ENCODE measurements at regions of chr12 and their contacts with region 1.

Region 1: DNA sequence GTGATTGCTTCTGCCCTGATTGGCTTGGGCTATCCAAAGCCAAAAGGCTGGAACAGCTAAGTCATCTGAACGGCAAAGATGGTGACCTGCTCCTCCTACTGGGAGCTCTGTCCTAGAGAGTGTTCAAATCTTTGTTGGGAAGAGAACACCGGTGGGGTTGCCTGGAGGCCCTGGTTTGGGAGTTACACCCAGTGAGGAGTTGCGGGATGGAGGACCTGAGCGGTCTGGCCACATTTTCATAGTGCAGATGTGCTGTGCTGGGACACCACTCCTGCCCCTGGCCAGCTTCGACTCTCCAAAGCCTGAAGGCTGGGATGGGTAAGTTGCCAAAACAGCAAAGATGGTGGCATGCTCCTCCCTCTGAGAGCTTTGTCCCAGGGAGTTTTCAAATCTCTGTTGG is 795.4 kb downstream of the TRHDE start:
- DNase-seq: no peak
- H3K4me3 ChIP-seq: no peak overlapping the region
- H3K4me3 Mint-ChIP-seq: no peak overlapping the region
- H3K27ac ChIP-seq: no peak overlapping the region
- H3K27ac Mint-ChIP-seq: no peak overlapping the region
- H3K4me1 ChIP-seq: no peaks in the 10 kb centered on the region
- H3K4me1 Mint-ChIP-seq: no peaks in the 10 kb centered on the region
- H3K27me3 ChIP-seq: no peaks in the 10 kb centered on the region
- H3K27me3 Mint-ChIP-seq: no peaks in the 10 kb centered on the region

Region 2: DNA sequence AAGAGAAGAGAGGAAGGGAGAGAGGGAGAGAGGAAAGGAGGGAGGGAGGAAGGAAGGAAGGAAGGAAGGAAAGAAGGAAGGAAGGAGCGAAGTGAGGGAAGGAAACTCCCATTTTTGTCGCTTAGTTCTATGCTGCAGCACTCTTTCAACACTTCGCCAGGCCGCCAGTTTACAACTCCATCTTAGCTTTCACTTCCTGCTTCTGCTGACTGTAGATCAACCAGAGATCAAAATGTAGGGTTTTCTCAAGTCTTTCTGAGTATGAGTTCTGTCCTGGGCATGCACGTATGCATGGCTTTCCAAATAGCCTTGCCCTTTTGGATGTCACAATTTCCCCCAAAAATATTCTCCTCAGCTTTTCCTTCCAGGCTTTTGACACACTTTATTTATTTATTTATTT is 72.0 kb before region 1 on chr12:
- CTCF ChIA-PET with region 1: no interaction called
- POLR2A ChIA-PET with region 1: no interaction called
- intact Hi-C with region 1: loop called (anchors 5 kb)
- DNase-seq: no peak
- H3K4me3 ChIP-seq: no peak overlapping the region
- H3K4me3 Mint-ChIP-seq: no peak overlapping the region
- H3K27ac ChIP-seq: no peak overlapping the region
- H3K27ac Mint-ChIP-seq: peak overlapping the region in 1 of 7 donors; percentile 85
- H3K4me1 ChIP-seq: no peaks in the 10 kb centered on the region
- H3K4me1 Mint-ChIP-seq: no peaks in the 10 kb centered on the region
- H3K27me3 ChIP-seq: no peaks in the 10 kb centered on the region
- H3K27me3 Mint-ChIP-seq: no peaks in the 10 kb centered on the region